Activated CD4-positive, alpha-beta T cell treated with anti-CD3 and anti-CD28 coated beads, Interleukin-2, amount 10 ng/mL, durations not matched to agents 7 days and 5 days (primary cell): ENCODE measurements at regions of chr1 and their contacts with region 1.

Region 1: DNA sequence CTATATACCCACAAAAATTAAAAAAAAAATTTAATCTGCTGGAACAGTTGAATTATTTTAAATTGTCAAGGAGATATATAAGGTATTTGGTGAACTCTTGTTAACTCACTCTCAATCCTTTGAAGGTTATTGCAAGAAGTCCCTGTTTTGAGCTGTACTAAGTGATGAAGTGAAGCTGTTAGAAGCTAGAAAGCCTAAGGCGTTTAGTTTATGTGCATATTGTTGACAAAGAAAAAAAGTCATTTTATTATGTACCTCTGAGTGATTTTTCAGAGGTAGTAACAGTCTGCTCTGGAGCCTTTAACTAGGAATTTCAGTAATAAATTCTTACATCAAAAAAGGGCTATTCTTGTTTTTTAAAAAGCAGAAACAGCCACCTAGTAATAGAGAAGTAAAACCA is 59.6 kb downstream of the TMEM200B start:
- DNase-seq: no peak
- H3K4me3 Mint-ChIP-seq: no peak overlapping the region
- H3K27ac Mint-ChIP-seq: no peak overlapping the region
- H3K4me1 Mint-ChIP-seq: peaks cover 7% of the 10 kb centered on the region
- H3K27me3 Mint-ChIP-seq: no peaks in the 10 kb centered on the region

Region 2: GRCh38 chr1:28933277-28933676 is 130.8 kb before region 1 on chr1:
- CTCF ChIA-PET with region 1: no interaction called
- POLR2A ChIA-PET with region 1: no interaction called
- DNase-seq: no peak
- H3K4me3 Mint-ChIP-seq: no peak overlapping the region
- H3K27ac Mint-ChIP-seq: peak overlapping the region; percentile 7
- H3K4me1 Mint-ChIP-seq: peaks cover 60% of the 10 kb centered on the region
- H3K27me3 Mint-ChIP-seq: no peaks in the 10 kb centered on the region

Region 3: GRCh38 chr1:29083317-29084195 is 19.5 kb after region 1 on chr1:
- CTCF ChIA-PET with region 1: interaction called, 3 read pairs
- POLR2A ChIA-PET with region 1: interaction called, 12 read pairs
- DNase-seq: no peak
- H3K4me3 Mint-ChIP-seq: no peak overlapping the region
- H3K27ac Mint-ChIP-seq: no peak overlapping the region
- H3K4me1 Mint-ChIP-seq: no peaks in the 10 kb centered on the region
- H3K27me3 Mint-ChIP-seq: no peaks in the 10 kb centered on the region